AG04450 (cell line): ENCODE measurements at regions of chr3 and their contacts with region 1.

Region 1: DNA sequence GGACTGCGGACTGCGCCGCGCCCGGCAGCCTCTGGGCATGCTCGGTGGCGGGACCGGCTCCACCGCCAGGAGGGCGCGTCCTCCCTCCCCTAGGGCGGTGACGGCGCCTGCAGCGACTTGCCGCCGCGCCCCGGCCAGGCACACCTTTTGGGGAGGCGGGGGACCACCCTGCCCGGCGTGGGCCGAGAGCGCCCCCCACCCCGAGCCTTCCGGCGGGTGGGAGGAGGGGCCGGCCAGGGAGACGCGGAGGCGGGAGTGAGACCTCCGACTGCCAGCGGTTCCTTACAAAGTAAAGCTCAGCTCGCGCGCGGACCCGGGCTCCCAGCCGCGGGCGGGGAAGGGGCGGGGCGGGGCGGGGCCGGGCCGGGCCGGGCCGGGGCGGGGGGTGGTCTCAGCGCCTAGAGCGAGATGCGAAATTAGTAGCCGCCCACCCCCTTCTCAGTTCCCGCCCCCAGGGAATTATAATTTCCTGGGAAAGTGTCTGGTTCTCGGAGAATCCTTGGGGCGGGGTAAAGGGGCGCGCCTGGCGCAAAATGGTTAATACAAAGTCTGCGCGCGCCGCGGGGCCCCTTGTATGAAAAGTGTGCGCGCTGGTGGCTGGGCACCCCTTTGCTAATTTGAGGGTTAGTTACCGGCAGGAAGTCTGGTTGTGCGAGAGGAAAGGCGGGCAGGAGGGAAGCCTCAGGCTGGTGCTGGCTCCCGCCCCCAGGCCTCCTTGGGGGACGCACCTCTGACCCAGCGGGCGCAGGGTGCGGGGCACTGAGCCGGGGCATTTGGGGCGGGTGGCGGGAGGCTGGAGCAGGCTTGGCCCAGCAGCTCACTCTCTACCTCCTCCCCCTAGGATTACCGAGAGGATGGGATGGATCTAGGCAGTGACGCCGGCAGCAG is 224.8 kb upstream of the IL12A start:
- DNase-seq: peak; percentile 54
- H3K4me3 ChIP-seq: peak overlapping the region; percentile 75
- H3K27ac ChIP-seq: peak overlapping the region; percentile 95
- H3K27me3 ChIP-seq: no peaks in the 10 kb centered on the region
- CTCF ChIP-seq: peak; percentile 25

Region 2: GRCh38 chr3:159443266-159443665 is 320.6 kb before region 1 on chr3:
- CTCF ChIA-PET with region 1: no interaction called
- POLR2A ChIA-PET with region 1: no interaction called
- DNase-seq: no peak
- H3K4me3 ChIP-seq: no peak overlapping the region
- H3K27ac ChIP-seq: no peak overlapping the region
- H3K27me3 ChIP-seq: peaks cover 16% of the 10 kb centered on the region
- CTCF ChIP-seq: no peak

Region 3: DNA sequence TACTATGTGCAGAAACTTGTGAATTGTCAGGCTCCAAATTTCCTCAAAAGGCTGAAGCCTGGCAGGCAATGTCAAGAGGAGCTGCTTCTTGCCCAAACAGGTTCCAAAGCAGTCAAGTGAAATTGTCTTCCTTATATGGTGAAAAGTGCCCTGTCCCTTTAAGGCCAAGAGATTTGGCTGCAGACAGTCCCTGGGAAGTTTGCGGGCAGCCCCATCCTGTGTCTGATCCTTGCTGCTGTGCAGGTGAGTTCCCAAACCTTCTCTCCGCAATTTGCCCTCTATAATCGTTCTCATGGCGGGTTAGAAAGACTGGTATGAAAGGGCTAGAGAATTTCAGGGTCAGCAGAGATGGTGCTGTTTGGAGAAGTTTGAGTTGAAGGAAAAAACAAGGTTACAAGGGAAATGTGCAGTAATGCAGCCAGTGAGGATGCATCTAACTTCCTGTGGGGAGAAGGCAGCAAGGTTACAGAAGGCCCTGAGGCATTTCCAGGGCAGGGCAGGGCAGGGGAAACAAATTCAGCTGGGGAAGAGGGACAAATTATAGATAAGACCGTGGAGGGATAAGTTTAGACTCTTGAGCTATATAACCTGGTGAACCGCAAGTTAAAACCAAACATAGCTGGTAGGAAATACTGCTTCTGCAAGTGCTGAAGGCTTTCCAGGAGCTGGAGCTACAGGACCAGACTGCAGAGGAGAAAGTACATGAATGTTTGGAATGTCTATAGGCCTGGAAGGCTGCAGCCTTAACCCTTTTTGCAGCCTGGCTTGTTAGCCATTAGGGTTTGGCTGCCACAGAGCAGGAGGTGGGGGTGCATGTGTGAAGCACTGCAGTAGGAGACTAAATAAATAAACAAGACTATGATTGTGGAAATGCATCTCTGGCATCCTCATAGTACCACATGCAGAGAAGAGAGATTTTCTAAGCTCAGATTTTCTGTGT is 31.4 kb before region 1 on chr3:
- CTCF ChIA-PET with region 1: interaction called, 5 read pairs
- POLR2A ChIA-PET with region 1: interaction called, 20 read pairs
- DNase-seq: peak; percentile 52
- H3K4me3 ChIP-seq: peak overlapping the region; percentile 52
- H3K27ac ChIP-seq: peak overlapping the region; percentile 40
- H3K27me3 ChIP-seq: no peaks in the 10 kb centered on the region
- CTCF ChIP-seq: 0 out of 2 replicates have a peak, but pooled peaks have one; percentile 14

Region 4: DNA sequence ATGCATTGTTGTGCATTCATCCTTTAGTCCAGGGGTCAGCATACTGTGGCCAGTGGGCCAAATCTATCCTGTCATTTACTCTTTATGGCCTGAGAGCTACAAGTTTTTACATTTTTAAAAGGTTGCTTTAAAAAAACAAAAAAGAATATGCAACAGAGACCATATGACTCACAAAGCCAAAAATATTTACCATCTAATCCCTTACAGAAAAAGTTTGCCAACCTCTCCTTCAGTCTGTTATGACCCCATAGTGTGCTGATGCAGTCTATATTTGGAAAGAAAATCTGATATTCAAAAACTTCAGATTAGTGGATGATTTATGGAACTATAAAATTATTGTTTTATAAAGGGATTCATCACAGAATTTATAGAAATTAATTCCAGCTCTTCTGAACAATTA is 12.7 kb before region 1 on chr3:
- CTCF ChIA-PET with region 1: interaction called, 3 read pairs
- POLR2A ChIA-PET with region 1: interaction called, 10 read pairs
- DNase-seq: no peak
- H3K4me3 ChIP-seq: no peak overlapping the region
- H3K27ac ChIP-seq: no peak overlapping the region
- H3K27me3 ChIP-seq: no peaks in the 10 kb centered on the region
- CTCF ChIP-seq: no peak

Region 5: DNA sequence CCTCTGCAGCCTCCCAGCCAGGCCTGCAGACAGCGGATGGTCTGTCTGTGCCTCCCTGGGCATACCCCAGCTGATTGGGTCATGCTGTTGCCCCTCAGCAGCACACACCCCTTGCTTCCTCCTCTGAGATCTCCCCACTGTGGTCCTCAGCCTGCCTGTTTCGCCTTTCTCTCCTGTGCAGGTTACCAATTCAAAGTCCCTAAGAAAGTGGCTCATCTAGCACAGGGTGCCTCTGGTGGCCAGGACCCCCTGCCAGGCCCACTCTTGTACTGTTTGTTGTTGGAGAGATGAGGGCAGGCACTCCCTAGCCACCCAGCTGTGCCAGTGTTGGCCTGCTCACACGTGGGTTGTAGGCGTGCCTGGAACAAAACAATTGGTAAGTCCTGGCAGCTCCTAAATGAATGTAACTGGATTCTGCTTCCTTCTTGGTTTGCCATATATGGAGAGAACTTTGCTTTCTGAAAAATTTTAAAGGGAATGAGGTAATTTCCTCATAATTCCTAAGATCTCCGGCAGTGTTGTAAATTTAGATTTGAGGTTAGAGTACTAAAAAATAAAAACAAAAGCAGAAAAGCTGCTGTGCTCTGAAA is 11.6 kb after region 1 on chr3:
- CTCF ChIA-PET with region 1: interaction called, 20 read pairs
- POLR2A ChIA-PET with region 1: interaction called, 9 read pairs
- DNase-seq: peak; percentile 71
- H3K4me3 ChIP-seq: no peak overlapping the region
- H3K27ac ChIP-seq: peak overlapping the region; percentile 85
- H3K27me3 ChIP-seq: no peaks in the 10 kb centered on the region
- CTCF ChIP-seq: no peak

Region 6: DNA sequence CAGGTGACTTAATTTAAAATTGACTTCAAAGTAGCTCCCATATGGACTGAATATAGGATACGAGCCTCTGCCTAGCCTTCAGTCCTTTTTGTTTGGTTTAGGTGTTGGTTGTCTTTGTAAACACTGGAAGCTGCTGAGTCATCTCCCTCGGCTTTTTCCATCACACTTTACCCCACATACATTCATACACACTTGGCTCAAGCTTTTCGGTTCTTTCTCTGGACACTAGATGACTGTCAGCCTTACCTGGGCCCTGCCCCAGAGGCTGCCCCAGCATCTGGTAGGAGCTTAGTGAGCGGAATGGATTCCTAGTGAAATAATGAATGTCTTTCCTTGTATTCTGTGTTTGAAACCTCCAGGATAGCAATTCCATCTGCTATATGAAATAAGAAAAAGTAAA is 23.3 kb after region 1 on chr3:
- CTCF ChIA-PET with region 1: interaction called, 56 read pairs
- POLR2A ChIA-PET with region 1: interaction called, 4 read pairs
- DNase-seq: peak; percentile 67
- H3K4me3 ChIP-seq: no peak overlapping the region
- H3K27ac ChIP-seq: peak overlapping the region; percentile 77
- H3K27me3 ChIP-seq: no peaks in the 10 kb centered on the region
- CTCF ChIP-seq: no peak

Region 7: GRCh38 chr3:159852821-159853505 is 89.1 kb after region 1 on chr3:
- CTCF ChIA-PET with region 1: no interaction called
- POLR2A ChIA-PET with region 1: interaction called, 12 read pairs
- DNase-seq: no peak
- H3K4me3 ChIP-seq: peak overlapping the region; percentile 44
- H3K27ac ChIP-seq: peak overlapping the region; percentile 94
- H3K27me3 ChIP-seq: no peaks in the 10 kb centered on the region
- CTCF ChIP-seq: no peak

Region 8: DNA sequence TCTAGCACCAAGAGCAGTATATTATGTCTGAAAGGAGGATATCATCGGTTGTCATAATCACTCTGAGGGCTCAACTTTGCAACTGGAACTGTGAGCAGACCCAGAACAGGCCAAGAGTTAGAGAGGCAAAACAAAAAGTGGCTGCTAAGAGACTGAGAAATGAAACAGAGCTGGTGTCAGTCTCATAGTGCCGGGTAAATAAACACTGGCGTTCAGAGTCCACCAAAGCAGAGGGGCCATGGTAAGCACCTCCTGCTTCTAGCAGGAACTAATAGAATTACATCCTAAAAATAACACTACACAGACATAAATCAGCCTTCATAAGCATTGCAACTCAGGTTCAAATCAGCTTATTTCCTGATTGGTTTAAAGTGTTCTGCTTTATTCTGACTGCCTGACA is 214.5 kb after region 1 on chr3:
- CTCF ChIA-PET with region 1: no interaction called
- POLR2A ChIA-PET with region 1: no interaction called
- DNase-seq: no peak
- H3K4me3 ChIP-seq: no peak overlapping the region
- H3K27ac ChIP-seq: no peak overlapping the region
- H3K27me3 ChIP-seq: no peaks in the 10 kb centered on the region
- CTCF ChIP-seq: no peak